ENCODE measurements at regions of chr5 and their contacts with region 1.

Region 1: GRCh38 chr5:95554647-95555548 is at the starts of genes ARSK and SKIC3:
- DNase-seq: peak; percentile 83 to 98 (median 87)
- ATAC-seq: peak; percentile 85
- H3K4me3 ChIP-seq: peak within 1 kb of the TSS; percentile 78
- H3K4me3 Mint-ChIP-seq: peak within 1 kb of the TSS; percentile 98
- H3K27ac ChIP-seq: peak within 1 kb of the TSS; percentile 69 to 78
- H3K27ac Mint-ChIP-seq: peak within 1 kb of the TSS; percentile 91
- H3K4me1 ChIP-seq: peaks cover 19% of the 10 kb centered on the region
- H3K4me1 Mint-ChIP-seq: peaks cover 59% of the 10 kb centered on the region
- H3K27me3 ChIP-seq: no peaks in the 10 kb centered on the region
- H3K27me3 Mint-ChIP-seq: no peaks in the 10 kb centered on the region
- CTCF ChIP-seq: peak; percentile 26
- total RNA-seq, gene ARSK: 2.2 to 2.7 TPM
- total RNA-seq, gene SKIC3: 63.8 to 65.2 TPM

Region 2: DNA sequence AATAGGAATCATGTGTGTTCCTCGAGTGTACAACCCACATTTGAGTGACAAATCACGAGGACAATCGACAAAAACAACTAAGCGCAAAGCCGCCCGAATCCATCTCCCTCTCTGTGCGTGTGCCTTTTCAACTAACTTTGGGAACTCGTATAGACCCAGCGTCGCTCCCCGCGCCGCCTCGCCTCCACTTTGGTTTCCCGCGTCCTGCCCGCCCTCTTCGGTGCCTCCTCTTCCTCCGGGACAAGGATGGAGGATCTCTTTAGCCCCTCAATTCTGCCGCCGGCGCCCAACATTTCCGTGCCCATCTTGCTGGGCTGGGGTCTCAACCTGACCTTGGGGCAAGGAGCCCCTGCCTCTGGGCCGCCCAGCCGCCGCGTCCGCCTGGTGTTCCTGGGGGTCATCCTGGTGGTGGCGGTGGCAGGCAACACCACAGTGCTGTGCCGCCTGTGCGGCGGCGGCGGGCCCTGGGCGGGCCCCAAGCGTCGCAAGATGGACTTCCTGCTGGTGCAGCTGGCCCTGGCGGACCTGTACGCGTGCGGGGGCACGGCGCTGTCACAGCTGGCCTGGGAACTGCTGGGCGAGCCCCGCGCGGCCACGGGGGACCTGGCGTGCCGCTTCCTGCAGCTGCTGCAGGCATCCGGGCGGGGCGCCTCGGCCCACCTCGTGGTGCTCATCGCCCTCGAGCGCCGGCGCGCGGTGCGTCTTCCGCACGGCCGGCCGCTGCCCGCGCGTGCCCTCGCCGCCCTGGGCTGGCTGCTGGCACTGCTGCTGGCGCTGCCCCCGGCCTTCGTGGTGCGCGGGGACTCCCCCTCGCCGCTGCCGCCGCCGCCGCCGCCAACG is 65.4 kb after region 1 on chr5 and contains the start of gene GPR150:
- CTCF ChIA-PET with region 1: interaction called, 4 read pairs
- POLR2A ChIA-PET with region 1: interaction called, 40 read pairs
- intact Hi-C with region 1: loop called (anchors 2 kb)
- DNase-seq: peak; percentile 33 to 86 (median 58)
- ATAC-seq: peak; percentile 60
- H3K4me3 ChIP-seq: peak within 1 kb of the TSS; percentile 83
- H3K4me3 Mint-ChIP-seq: peak within 1 kb of the TSS; percentile 95
- H3K27ac ChIP-seq: peak within 1 kb of the TSS in 1 of 2 donors; percentile 37
- H3K27ac Mint-ChIP-seq: peak within 1 kb of the TSS; percentile 69
- H3K4me1 ChIP-seq: peaks cover 48% of the 10 kb centered on the region
- H3K4me1 Mint-ChIP-seq: peaks cover 77% of the 10 kb centered on the region
- H3K27me3 ChIP-seq: no peaks in the 10 kb centered on the region
- H3K27me3 Mint-ChIP-seq: no peaks in the 10 kb centered on the region
- CTCF ChIP-seq: no peak
- total RNA-seq, gene GPR150: 0.60 to 0.75 TPM

Region 3: DNA sequence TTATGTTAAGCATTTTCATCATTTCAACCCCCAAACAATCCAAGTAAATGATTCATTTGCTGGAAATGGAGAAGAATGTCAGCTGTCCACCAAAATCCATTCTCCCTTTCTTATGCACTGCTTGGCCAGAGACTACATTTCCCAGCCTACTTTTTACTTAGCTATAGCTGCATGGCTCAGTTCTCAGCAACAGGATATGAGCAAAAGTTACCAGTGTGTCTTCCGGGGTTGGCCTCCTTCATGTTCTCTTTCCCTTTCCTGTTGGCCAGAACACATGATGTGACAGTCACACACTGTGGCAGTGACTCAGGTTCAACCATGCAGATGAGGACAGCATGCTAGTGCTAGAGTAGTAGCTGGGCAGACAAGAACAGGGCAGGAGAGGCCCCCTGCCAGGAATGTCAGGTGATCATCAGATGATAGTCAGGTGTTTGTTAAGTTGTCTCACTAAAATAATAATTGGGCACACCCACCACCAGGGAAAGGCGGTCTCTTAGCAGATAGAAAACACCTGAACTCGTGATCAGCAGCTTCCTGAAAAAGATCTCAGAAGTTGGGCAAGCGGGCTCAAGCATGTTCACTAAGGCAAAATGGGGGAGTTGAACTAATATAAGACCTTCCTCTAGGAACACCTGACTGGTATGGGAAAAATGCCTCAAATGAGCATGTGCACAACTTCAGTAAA is 77.2 kb after region 1 on chr5:
- CTCF ChIA-PET with region 1: no interaction called
- POLR2A ChIA-PET with region 1: interaction called, 13 read pairs
- intact Hi-C with region 1: no loop called
- DNase-seq: peak; percentile 44 to 90 (median 62)
- ATAC-seq: peak; percentile 98
- H3K4me3 ChIP-seq: no peak overlapping the region
- H3K4me3 Mint-ChIP-seq: peak overlapping the region; percentile 9
- H3K27ac ChIP-seq: peak overlapping the region; percentile 16 to 80
- H3K27ac Mint-ChIP-seq: peak overlapping the region; percentile 89
- H3K4me1 ChIP-seq: peaks cover 19% of the 10 kb centered on the region
- H3K4me1 Mint-ChIP-seq: peaks cover 42% of the 10 kb centered on the region
- H3K27me3 ChIP-seq: no peaks in the 10 kb centered on the region
- H3K27me3 Mint-ChIP-seq: no peaks in the 10 kb centered on the region
- CTCF ChIP-seq: no peak

Region 4: DNA sequence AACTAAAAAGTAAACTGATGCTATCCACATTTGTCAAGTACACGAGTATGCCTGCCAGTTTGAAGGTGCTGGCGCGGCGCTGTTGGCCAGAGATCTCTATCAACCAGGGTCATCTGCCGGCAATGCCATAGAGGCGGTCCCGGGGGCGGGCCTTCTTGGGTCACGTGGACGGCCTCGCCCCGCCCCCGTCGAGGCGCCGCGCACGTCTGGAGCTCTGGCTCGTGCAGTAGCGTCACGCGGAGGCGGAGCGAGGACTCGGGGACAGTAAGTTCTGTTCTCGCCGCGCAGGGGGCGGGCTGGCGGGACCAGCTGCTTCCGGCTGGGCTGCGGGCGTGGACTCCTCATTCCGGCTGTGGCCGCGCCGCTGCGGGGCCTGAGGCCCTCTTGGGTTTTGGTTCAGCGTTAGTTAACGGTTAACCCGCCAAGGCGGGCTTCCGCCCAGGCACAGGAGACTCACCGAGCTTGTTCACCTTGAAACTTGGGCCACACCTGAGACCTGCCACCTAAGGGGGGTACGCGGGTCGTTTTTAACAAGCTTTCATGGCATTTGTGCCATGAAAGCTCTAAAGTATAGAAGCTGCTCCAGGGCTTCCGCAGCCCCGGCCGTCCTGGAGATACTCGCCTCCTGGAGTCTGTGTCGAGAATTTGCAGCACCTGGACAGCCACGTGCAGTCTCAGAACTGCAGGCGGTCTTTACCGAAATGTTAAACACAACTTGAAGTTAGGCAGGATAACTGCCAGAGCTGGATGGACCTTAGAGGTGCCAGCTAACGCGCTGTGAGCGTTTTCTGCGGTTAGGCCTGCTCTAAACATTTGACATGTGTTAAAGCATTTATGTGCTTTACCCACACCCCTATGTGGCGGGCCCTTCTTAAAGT is 91.9 kb after region 1 on chr5 and contains the start of gene RFESD:
- CTCF ChIA-PET with region 1: interaction called, 3 read pairs
- POLR2A ChIA-PET with region 1: interaction called, 22 read pairs
- intact Hi-C with region 1: loop called (anchors 1 to 5 kb)
- DNase-seq: peak; percentile 82 to 97 (median 90)
- ATAC-seq: peak; percentile 92
- H3K4me3 ChIP-seq: peak within 1 kb of the TSS; percentile 74
- H3K4me3 Mint-ChIP-seq: peak within 1 kb of the TSS; percentile 88
- H3K27ac ChIP-seq: peak within 1 kb of the TSS; percentile 71 to 74
- H3K27ac Mint-ChIP-seq: peak within 1 kb of the TSS; percentile 68
- H3K4me1 ChIP-seq: peaks cover 18% of the 10 kb centered on the region
- H3K4me1 Mint-ChIP-seq: peaks cover 51% of the 10 kb centered on the region
- H3K27me3 ChIP-seq: no peaks in the 10 kb centered on the region
- H3K27me3 Mint-ChIP-seq: no peaks in the 10 kb centered on the region
- CTCF ChIP-seq: no peak
- total RNA-seq, gene RFESD: 1.3 to 1.5 TPM

Region 5: GRCh38 chr5:95808686-95809413 is 254.0 kb after region 1 on chr5:
- CTCF ChIA-PET with region 1: no interaction called
- POLR2A ChIA-PET with region 1: no interaction called
- intact Hi-C with region 1: loop called in 1 of 2 experiments (anchors 10 kb)
- DNase-seq: peak; percentile 59 to 94 (median 76)
- ATAC-seq: peak; percentile 100
- H3K4me3 ChIP-seq: peak overlapping the region; percentile 9
- H3K4me3 Mint-ChIP-seq: peak overlapping the region; percentile 26
- H3K27ac ChIP-seq: peak overlapping the region; percentile 63 to 79
- H3K27ac Mint-ChIP-seq: peak overlapping the region; percentile 76
- H3K4me1 ChIP-seq: peaks cover 59% of the 10 kb centered on the region
- H3K4me1 Mint-ChIP-seq: peaks cover 65% of the 10 kb centered on the region
- H3K27me3 ChIP-seq: no peaks in the 10 kb centered on the region
- H3K27me3 Mint-ChIP-seq: no peaks in the 10 kb centered on the region
- CTCF ChIP-seq: no peak

Region 6: GRCh38 chr5:96662725-96663513 is 1108.0 kb after region 1 on chr5:
- CTCF ChIA-PET with region 1: no interaction called
- POLR2A ChIA-PET with region 1: no interaction called
- intact Hi-C with region 1: loop called in 1 of 2 experiments (anchors 10 kb)
- DNase-seq: peak; percentile 55 to 93 (median 80)
- ATAC-seq: peak; percentile 72
- H3K4me3 ChIP-seq: peak overlapping the region; percentile 88
- H3K4me3 Mint-ChIP-seq: peak overlapping the region; percentile 96
- H3K27ac ChIP-seq: peak overlapping the region; percentile 68 to 77
- H3K27ac Mint-ChIP-seq: peak overlapping the region; percentile 95
- H3K4me1 ChIP-seq: peaks cover 25% of the 10 kb centered on the region
- H3K4me1 Mint-ChIP-seq: peaks cover 57% of the 10 kb centered on the region
- H3K27me3 ChIP-seq: no peaks in the 10 kb centered on the region
- H3K27me3 Mint-ChIP-seq: no peaks in the 10 kb centered on the region
- CTCF ChIP-seq: no peak

Region 7: GRCh38 chr5:97183100-97183929 is 1628.4 kb after region 1 on chr5 and contains the start of gene RIOK2:
- CTCF ChIA-PET with region 1: no interaction called
- POLR2A ChIA-PET with region 1: interaction called, 3 read pairs
- intact Hi-C with region 1: loop called in 1 of 2 experiments (anchors 10 kb)
- DNase-seq: peak; percentile 81 to 96 (median 90)
- ATAC-seq: peak; percentile 91
- H3K4me3 ChIP-seq: peak within 1 kb of the TSS; percentile 73
- H3K4me3 Mint-ChIP-seq: peak within 1 kb of the TSS; percentile 97
- H3K27ac ChIP-seq: peak within 1 kb of the TSS; percentile 90 to 96
- H3K27ac Mint-ChIP-seq: peak within 1 kb of the TSS; percentile 98
- H3K4me1 ChIP-seq: peaks cover 11% of the 10 kb centered on the region
- H3K4me1 Mint-ChIP-seq: peaks cover 44% of the 10 kb centered on the region
- H3K27me3 ChIP-seq: no peaks in the 10 kb centered on the region
- H3K27me3 Mint-ChIP-seq: no peaks in the 10 kb centered on the region
- CTCF ChIP-seq: no peak
- total RNA-seq, gene RIOK2: 25.1 to 26.0 TPM